CD8-positive, alpha-beta T cell (primary cell): ENCODE measurements at regions of chr1 and their contacts with region 1.

Region 1: DNA sequence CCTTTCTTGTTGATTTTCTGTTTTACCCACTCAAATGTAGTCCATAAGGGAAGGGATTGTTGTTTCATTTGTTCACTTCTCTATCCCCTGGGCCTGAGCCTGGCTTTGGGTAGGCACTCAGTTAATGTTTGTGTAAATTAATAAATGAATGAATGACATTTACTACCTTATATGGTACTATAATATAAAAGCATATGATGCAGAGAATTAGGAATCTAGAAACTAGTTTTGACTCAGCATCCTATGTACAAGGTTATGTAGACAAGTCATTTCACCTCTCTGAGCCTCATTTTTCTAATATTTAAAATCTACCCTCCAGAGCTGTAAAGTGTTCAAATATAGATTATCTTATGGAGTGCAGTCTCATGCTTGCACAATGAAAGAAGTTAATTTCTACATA is 68.9 kb upstream of the S1PR1 start:
- DNase-seq: no peak
- ATAC-seq: no peak
- H3K4me3 ChIP-seq: no peak overlapping the region
- H3K4me3 Mint-ChIP-seq: no peak overlapping the region
- H3K27ac ChIP-seq: no peak overlapping the region
- H3K27ac Mint-ChIP-seq: no peak overlapping the region
- H3K4me1 ChIP-seq: no peaks in the 10 kb centered on the region
- H3K4me1 Mint-ChIP-seq: no peaks in the 10 kb centered on the region
- H3K27me3 ChIP-seq: no peaks in the 10 kb centered on the region
- H3K27me3 Mint-ChIP-seq: no peaks in the 10 kb centered on the region
- CTCF ChIP-seq: no peak

Region 2: GRCh38 chr1:101190441-101190840 is 22.6 kb after region 1 on chr1:
- CTCF ChIA-PET with region 1: no interaction called
- POLR2A ChIA-PET with region 1: no interaction called
- intact Hi-C with region 1: no loop called
- DNase-seq: no peak
- ATAC-seq: no peak
- H3K4me3 ChIP-seq: no peak overlapping the region
- H3K4me3 Mint-ChIP-seq: no peak overlapping the region
- H3K27ac ChIP-seq: no peak overlapping the region
- H3K27ac Mint-ChIP-seq: no peak overlapping the region
- H3K4me1 ChIP-seq: no peaks in the 10 kb centered on the region
- H3K4me1 Mint-ChIP-seq: peaks cover 9% of the 10 kb centered on the region
- H3K27me3 ChIP-seq: no peaks in the 10 kb centered on the region
- H3K27me3 Mint-ChIP-seq: no peaks in the 10 kb centered on the region
- CTCF ChIP-seq: no peak

Region 3: DNA sequence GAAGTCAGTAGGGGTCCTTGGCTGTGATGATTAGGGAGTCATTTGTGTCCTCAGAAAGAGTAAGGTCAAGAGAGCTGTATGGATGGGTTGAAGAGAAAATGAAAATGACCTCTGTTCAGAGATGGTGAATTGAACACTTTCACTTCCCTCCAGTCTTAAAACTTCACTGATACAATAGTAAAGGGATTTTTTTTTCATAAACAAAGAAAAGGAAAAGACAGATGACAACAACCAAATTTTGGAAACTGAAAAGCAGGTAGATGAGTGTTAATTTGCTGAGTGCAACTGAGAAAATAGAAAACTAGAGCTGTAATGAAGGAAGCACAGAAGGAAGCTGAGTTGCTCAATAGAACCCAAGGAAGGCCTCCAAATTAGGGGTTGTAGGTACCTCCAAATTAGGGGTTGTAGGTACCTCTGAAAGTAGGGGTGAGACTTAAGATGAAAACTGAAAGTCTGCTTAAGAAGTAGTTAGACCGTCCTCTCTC is 54.1 kb after region 1 on chr1:
- CTCF ChIA-PET with region 1: no interaction called
- POLR2A ChIA-PET with region 1: no interaction called
- intact Hi-C with region 1: loop called in 1 of 2 experiments (anchors 5 kb)
- DNase-seq: no peak
- ATAC-seq: no peak
- H3K4me3 ChIP-seq: no peak overlapping the region
- H3K4me3 Mint-ChIP-seq: no peak overlapping the region
- H3K27ac ChIP-seq: no peak overlapping the region
- H3K27ac Mint-ChIP-seq: no peak overlapping the region
- H3K4me1 ChIP-seq: no peaks in the 10 kb centered on the region
- H3K4me1 Mint-ChIP-seq: peaks cover 8% of the 10 kb centered on the region
- H3K27me3 ChIP-seq: no peaks in the 10 kb centered on the region
- H3K27me3 Mint-ChIP-seq: no peaks in the 10 kb centered on the region
- CTCF ChIP-seq: no peak